ENCODE measurements at regions of chr14 and their contacts with region 1.

Region 1: DNA sequence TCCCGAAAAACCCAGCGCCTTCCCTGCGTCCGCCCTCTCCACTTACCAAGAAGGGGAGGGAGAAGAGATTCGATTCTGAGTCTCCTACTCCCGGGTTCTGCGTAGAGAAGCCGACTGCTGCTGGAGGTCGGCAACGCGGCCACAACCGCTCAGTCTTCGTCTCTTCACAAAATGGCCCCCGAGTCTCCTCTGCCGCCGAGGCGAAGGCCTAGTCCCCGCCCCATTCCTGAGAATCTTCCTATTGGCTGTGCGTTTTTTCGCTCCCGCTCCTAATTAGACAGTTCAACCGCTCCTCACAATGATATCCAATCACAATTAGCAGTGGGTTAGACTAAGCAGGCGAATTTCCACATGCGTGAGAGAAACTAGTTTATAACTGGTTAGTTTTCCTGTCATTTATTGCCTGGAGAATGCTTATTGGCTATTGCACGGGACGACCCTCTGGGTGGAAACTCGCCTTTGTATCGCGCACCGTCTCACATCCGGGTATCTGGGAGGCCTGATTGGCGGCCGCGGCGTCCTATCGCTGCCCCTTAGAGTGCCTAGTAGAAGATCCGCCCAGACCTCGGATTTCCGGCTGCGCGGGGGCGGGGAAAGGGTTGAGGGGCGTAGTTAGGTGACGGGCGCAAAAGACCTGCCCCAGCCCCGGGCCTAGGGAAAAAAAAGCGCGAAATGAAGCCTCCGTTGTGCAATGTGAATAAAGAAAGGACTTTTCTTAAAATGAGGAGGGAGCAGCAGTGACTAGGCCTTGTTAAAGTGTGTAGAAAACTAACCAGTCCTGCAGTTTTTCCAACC is at the start of gene HNRNPC:
- DNase-seq: peak; percentile 99 to 100
- H3K4me3 ChIP-seq: peak within 1 kb of the TSS; percentile 81 to 100 (median 100)
- H3K27ac ChIP-seq: peak within 1 kb of the TSS; percentile 99
- H3K4me1 ChIP-seq: peaks cover 2 to 9% (median 3%) of the 10 kb centered on the region in 4 experiments; a peak in 5 of 7 replicates
- H3K27me3 ChIP-seq: no peaks in the 10 kb centered on the region
- CTCF ChIP-seq: no peak
- EP300 ChIP-seq: no peak
- POLR2A ChIP-seq: peak; percentile 96 to 99
- RAD21 ChIP-seq: no peak
- total RNA-seq, gene HNRNPC: 1,203 and 1,207 TPM in 2 replicates

Region 2: DNA sequence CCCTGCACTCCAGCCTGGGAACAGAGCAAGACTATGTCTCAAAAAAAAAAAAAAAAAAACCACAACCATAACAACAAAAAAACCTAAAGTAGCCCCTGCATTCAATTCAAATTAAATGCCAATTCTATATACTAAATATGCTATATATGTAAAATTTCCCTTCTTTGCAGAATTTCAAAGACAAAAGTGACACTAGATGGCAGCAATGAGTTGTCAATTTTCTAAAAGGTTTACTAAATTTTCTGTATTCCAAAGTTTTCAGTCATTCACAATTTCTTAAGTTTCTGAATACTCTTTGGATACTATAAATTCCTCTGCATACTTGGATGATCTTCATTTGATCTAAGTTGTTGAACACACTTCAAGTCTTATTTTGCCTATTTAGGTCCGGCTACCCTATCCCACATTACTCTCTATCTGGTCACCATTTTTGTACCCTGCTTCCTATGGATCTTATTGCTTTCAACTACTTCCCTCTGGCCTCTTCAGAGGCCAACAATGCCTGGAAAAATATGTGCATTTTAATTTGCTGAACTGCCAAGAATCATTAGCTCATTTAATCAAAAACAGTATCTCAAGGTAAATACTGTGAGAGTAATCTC is 28.1 kb before region 1 on chr14:
- CTCF ChIA-PET with region 1: interaction called, 5 read pairs
- POLR2A ChIA-PET with region 1: interaction called, 836 read pairs
- DNase-seq: no peak
- H3K4me3 ChIP-seq: no peak overlapping the region
- H3K27ac ChIP-seq: no peak overlapping the region
- H3K4me1 ChIP-seq: no peaks in the 10 kb centered on the region; a peak in 1 of 7 replicates
- H3K27me3 ChIP-seq: no peaks in the 10 kb centered on the region
- CTCF ChIP-seq: no peak
- EP300 ChIP-seq: no peak
- POLR2A ChIP-seq: 0 out of 3 replicates have a peak, but pooled peaks of 1 of the 2 experiments have one; percentile 6
- RAD21 ChIP-seq: no peak

Region 3: GRCh38 chr14:21257394-21257909 is 12.0 kb before region 1 on chr14:
- CTCF ChIA-PET with region 1: interaction called, 4 read pairs
- POLR2A ChIA-PET with region 1: interaction called, 836 read pairs
- DNase-seq: no peak
- H3K4me3 ChIP-seq: no peak overlapping the region
- H3K27ac ChIP-seq: no peak overlapping the region
- H3K4me1 ChIP-seq: peaks cover 2 to 4% (median 2%) of the 10 kb centered on the region in 4 experiments; a peak in 5 of 7 replicates
- H3K27me3 ChIP-seq: no peaks in the 10 kb centered on the region
- CTCF ChIP-seq: no peak
- EP300 ChIP-seq: no peak
- POLR2A ChIP-seq: peak; percentile 46 to 70
- RAD21 ChIP-seq: no peak

Region 4: GRCh38 chr14:21287168-21287567 is 17.7 kb after region 1 on chr14:
- CTCF ChIA-PET with region 1: interaction called, 6 read pairs
- POLR2A ChIA-PET with region 1: interaction called, 90 read pairs
- DNase-seq: no peak
- H3K4me3 ChIP-seq: no peak overlapping the region
- H3K27ac ChIP-seq: no peak overlapping the region
- H3K4me1 ChIP-seq: no peaks in the 10 kb centered on the region
- H3K27me3 ChIP-seq: no peaks in the 10 kb centered on the region
- CTCF ChIP-seq: no peak
- EP300 ChIP-seq: no peak
- POLR2A ChIP-seq: no peak
- RAD21 ChIP-seq: no peak

Region 5: DNA sequence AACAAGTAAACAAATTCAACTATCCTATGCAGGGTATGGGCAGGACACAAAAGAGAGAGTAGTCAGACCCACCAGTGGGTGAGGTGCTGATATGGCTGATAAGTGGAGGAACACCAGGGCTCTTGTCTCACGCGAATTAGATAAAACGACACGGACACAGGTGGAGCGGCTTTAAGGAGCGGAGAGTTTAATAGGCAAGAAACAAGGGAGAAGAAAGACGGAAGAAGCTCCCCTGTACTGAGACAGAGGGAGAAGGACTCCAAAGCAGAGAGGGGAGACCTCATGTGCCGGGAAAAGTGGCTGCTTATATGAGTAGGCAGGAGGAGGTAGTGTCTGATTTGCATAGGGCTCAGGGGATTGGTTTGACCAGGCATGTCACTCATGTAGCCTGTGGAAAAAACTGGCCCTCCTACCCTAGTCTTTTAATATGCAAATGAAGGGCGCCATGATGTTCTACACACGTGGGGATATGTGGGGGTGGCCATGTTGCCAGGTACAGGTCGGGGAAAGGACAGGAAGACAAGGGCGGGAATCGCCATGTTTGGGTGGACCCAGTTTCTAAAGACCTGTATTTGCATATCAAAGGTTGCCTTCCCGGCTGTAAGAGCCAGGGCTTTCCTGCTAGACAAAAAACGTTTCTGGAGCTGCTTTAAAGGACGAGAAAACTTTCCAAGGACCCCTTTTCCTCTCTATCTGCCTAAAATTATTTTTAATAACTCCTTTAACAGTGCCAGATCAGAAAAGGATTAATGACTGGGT is 39.2 kb after region 1 on chr14:
- CTCF ChIA-PET with region 1: no interaction called
- POLR2A ChIA-PET with region 1: interaction called, 44 read pairs
- DNase-seq: peak; percentile 79 to 92
- H3K4me3 ChIP-seq: peak overlapping the region; percentile 46 to 65 (median 50); a peak in 7 of 8 replicates
- H3K27ac ChIP-seq: peak overlapping the region; percentile 94
- H3K4me1 ChIP-seq: peaks cover 2 to 9% (median 4%) of the 10 kb centered on the region in 4 experiments; a peak in 4 of 7 replicates
- H3K27me3 ChIP-seq: no peaks in the 10 kb centered on the region
- CTCF ChIP-seq: no peak
- EP300 ChIP-seq: no peak
- POLR2A ChIP-seq: peak; percentile 97
- RAD21 ChIP-seq: no peak